G401 (cell line): ENCODE measurements at regions of chr16 and their contacts with region 1.

Region 1: GRCh38 chr16:4693296-4693955 is at the start of gene NUDT16L1:
- DNase-seq: peak; percentile 97
- total RNA-seq, gene NUDT16L1: 71.5 and 89.1 TPM in 2 replicates

Region 2: GRCh38 chr16:4506450-4506849 is 187.0 kb before region 1 on chr16:
- in situ Hi-C with region 1: loop called (anchors 25 kb)
- DNase-seq: peak; percentile 91

Region 3: DNA sequence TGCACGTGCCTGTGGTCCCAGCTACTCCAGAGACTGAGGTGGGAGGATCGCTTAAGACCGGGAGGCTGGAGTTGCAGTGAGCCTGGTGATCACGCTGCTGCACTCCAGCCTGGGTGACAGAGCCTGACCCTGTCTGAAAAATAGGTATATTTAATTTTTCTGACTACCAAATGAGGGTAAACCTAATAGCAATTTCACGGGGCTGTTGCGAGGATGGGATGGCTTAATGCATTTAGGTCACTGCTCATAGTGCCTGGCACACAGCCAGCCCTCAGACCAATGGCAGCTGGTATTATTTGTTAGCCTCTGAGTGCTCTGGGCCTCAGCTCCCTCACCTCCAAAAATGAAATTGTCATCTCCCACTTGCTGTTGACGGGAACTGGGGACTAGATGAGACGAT is 149.0 kb before region 1 on chr16:
- in situ Hi-C with region 1: no loop called
- DNase-seq: peak; percentile 87